ENCODE measurements at regions of chr12 and their contacts with region 1.

Region 1: DNA sequence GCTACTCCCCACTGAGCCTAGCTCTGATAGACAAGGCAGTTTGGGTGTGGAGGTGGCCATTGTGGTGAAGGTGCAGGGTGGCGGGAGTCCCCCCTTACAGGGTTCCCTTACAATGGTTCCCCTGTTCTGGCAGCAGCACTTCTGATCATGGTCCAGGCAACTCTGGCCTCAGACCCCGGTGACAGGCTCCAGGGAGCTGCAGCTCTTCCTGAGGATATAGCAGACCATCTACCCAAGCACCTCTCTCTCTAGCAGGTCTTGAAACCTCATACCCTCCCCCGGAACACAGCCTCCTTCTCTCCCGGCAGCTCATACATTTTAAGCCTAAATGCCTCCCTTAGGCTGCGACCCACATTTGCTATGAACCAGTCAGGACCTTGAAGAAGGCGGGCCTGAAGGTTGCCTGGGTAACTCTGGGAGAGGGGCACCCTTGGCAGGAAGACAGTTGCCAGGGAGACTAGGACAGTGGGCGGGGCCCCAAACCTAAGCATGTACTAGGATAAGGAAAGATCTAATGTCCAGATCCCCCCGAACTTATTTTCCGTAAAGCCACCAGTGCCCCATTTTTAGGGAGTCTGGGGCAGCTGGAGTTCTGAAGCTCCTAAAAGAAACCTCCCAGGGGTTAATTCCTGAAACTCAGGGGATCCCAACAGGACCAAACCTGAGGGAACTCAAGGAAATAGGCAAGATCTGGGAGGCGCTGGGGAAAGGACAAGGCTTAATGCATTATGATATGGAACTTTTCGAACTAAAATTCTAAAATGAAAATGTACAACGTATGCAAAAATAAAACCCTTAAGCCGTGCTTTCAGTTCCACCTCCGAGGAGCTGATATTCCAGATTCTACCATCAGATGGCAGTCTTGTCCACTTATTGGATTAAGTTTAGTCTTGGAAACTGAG is 4.5 kb upstream of the GDF11 start:
- H3K4me3 ChIP-seq: peak overlapping the region; percentile 43
- H3K27ac ChIP-seq: peak overlapping the region; percentile 43; the same call in 1 of the 2 replicates
- H3K4me1 ChIP-seq: peaks cover 11% of the 10 kb centered on the region; the same call in 1 of the 2 replicates
- CTCF ChIP-seq: peak; percentile 57; the same call in 1 of the 2 replicates

Region 2: GRCh38 chr12:55330446-55330845 is 407.9 kb before region 1 on chr12 and contains the start of gene OR6C3:
- CTCF ChIA-PET with region 1: no interaction called
- POLR2A ChIA-PET with region 1: no interaction called
- H3K4me3 ChIP-seq: no peak within 1 kb of the TSS
- H3K27ac ChIP-seq: no peak within 1 kb of the TSS
- H3K4me1 ChIP-seq: no peaks in the 10 kb centered on the region
- CTCF ChIP-seq: no peak

Region 3: DNA sequence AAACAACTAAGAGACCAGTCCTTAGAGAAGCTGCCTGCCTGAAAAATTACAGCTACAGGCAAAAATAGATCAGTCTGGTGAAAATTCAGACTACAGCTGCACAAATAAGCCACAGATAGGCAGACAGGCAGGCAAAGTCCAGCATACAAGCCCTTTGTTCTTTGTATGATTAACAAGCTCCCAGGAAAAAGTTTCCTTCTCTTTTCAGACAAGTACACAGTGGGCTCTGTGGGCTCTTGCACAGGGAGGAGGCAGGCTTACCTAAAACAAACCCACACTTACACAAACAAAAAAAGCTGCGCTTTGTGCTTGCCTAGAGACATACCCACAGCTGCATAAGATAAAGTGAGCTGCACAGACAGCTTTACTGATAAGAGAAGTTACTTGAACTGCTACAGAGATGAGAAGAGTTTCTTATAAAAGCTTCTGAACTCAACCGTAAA is 238.5 kb before region 1 on chr12:
- CTCF ChIA-PET with region 1: no interaction called
- POLR2A ChIA-PET with region 1: no interaction called
- H3K4me3 ChIP-seq: no peak overlapping the region
- H3K27ac ChIP-seq: no peak overlapping the region
- H3K4me1 ChIP-seq: no peaks in the 10 kb centered on the region
- CTCF ChIP-seq: no peak

Region 4: DNA sequence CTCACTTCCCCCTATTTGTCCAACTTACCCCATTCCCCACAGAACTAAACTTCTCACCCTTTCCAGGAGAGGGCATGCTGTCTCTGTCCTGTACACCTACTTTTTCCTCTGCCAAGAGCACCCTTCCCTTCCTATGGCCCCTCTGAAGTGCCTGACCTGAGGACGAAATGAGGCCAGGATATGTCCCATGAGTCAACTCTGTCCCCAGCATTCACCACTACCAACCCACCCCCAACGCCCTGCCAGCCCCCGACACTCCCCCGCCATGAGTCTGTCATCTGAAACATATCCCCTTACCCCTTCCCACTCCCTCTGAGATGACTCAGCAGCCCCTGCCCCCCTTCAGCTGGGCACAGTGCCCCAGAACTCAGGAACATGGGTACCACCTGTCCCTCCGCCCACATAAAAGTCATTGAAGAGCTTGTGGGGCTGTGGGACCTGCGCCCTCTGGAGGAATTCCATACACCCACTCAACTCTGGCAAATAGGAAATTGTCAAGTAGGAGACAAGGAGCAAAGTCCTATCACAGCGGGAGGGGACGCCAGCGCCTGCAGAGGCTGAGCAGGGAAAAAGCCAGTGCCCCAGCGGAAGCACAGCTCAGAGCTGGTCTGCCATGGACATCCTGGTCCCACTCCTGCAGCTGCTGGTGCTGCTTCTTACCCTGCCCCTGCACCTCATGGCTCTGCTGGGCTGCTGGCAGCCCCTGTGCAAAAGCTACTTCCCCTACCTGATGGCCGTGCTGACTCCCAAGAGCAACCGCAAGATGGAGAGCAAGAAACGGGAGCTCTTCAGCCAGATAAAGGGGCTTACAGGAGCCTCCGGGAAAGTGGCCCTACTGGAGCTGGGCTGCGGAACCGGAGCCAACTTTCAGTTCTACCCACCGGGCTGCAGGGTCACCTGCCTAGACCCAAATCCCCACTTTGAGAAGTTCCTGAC is 57.0 kb before region 1 on chr12:
- CTCF ChIA-PET with region 1: interaction called, 17 read pairs
- POLR2A ChIA-PET with region 1: interaction called, 3 read pairs
- H3K4me3 ChIP-seq: peak overlapping the region; percentile 26
- H3K27ac ChIP-seq: no peak overlapping the region; the same call in 1 of the 2 replicates
- H3K4me1 ChIP-seq: no peaks in the 10 kb centered on the region
- CTCF ChIP-seq: peak; percentile 95

Region 5: GRCh38 chr12:55780685-55781084 is 42.3 kb after region 1 on chr12:
- CTCF ChIA-PET with region 1: interaction called, 10 read pairs
- POLR2A ChIA-PET with region 1: no interaction called
- H3K4me3 ChIP-seq: no peak overlapping the region
- H3K27ac ChIP-seq: no peak overlapping the region
- H3K4me1 ChIP-seq: no peaks in the 10 kb centered on the region
- CTCF ChIP-seq: no peak

Region 6: GRCh38 chr12:55817346-55818139 is 79.2 kb after region 1 on chr12 and contains the starts of genes ORMDL2 and SARNP:
- CTCF ChIA-PET with region 1: interaction called, 67 read pairs
- POLR2A ChIA-PET with region 1: interaction called, 12 read pairs
- H3K4me3 ChIP-seq: peak within 1 kb of the TSS; percentile 83
- H3K27ac ChIP-seq: peak within 1 kb of the TSS; percentile 72
- H3K4me1 ChIP-seq: peaks cover 6% of the 10 kb centered on the region; the same call in 1 of the 2 replicates
- CTCF ChIP-seq: no peak

Region 7: GRCh38 chr12:55926738-55927587 is 188.6 kb after region 1 on chr12:
- CTCF ChIA-PET with region 1: interaction called, 11 read pairs
- POLR2A ChIA-PET with region 1: interaction called, 9 read pairs
- H3K4me3 ChIP-seq: peak overlapping the region; percentile 80
- H3K27ac ChIP-seq: peak overlapping the region; percentile 94
- H3K4me1 ChIP-seq: peaks cover 4% of the 10 kb centered on the region; the same call in 1 of the 2 replicates
- CTCF ChIP-seq: peak; percentile 91

Region 8: GRCh38 chr12:55996715-55997534 is 258.6 kb after region 1 on chr12 and contains the start of gene SUOX:
- CTCF ChIA-PET with region 1: interaction called, 30 read pairs
- POLR2A ChIA-PET with region 1: interaction called, 4 read pairs
- H3K4me3 ChIP-seq: peak within 1 kb of the TSS; percentile 65
- H3K27ac ChIP-seq: peak within 1 kb of the TSS; percentile 38; the same call in 1 of the 2 replicates
- H3K4me1 ChIP-seq: no peaks in the 10 kb centered on the region; the same call in 1 of the 2 replicates
- CTCF ChIP-seq: no peak

Region 9: GRCh38 chr12:56014206-56014605 is 275.8 kb after region 1 on chr12:
- CTCF ChIA-PET with region 1: no interaction called
- POLR2A ChIA-PET with region 1: no interaction called
- H3K4me3 ChIP-seq: no peak overlapping the region
- H3K27ac ChIP-seq: no peak overlapping the region
- H3K4me1 ChIP-seq: no peaks in the 10 kb centered on the region
- CTCF ChIP-seq: no peak

Region 10: GRCh38 chr12:56189176-56189917 is 451.0 kb after region 1 on chr12 and contains the start of gene SMARCC2:
- CTCF ChIA-PET with region 1: interaction called, 18 read pairs
- POLR2A ChIA-PET with region 1: no interaction called
- H3K4me3 ChIP-seq: peak within 1 kb of the TSS; percentile 87
- H3K27ac ChIP-seq: peak within 1 kb of the TSS; percentile 86
- H3K4me1 ChIP-seq: no peaks in the 10 kb centered on the region; the same call in 1 of the 2 replicates
- CTCF ChIP-seq: peak; percentile 92

Measured in HEK293 (cell line).